Ovary (tissue), 10 donors: ENCODE measurements at regions of chr13 and their contacts with region 1.

Region 1: GRCh38 chr13:102596147-102597028 is at the start of gene TPP2:
- DNase-seq: peak; percentile 99 to 100 (median 99)
- H3K4me3 ChIP-seq: peak within 1 kb of the TSS; percentile 97
- H3K27ac ChIP-seq: peak within 1 kb of the TSS; percentile 97 to 100
- H3K4me1 ChIP-seq: peaks cover 5% of the 10 kb centered on the region
- H3K27me3 ChIP-seq: no peaks in the 10 kb centered on the region
- CTCF ChIP-seq: peak in 1 of 3 donors; percentile 8
- EP300 ChIP-seq: no peak
- POLR2A ChIP-seq: peak; percentile 67
- total RNA-seq, gene TPP2: 27.8 to 50.7 (median 36.5) TPM

Region 2: DNA sequence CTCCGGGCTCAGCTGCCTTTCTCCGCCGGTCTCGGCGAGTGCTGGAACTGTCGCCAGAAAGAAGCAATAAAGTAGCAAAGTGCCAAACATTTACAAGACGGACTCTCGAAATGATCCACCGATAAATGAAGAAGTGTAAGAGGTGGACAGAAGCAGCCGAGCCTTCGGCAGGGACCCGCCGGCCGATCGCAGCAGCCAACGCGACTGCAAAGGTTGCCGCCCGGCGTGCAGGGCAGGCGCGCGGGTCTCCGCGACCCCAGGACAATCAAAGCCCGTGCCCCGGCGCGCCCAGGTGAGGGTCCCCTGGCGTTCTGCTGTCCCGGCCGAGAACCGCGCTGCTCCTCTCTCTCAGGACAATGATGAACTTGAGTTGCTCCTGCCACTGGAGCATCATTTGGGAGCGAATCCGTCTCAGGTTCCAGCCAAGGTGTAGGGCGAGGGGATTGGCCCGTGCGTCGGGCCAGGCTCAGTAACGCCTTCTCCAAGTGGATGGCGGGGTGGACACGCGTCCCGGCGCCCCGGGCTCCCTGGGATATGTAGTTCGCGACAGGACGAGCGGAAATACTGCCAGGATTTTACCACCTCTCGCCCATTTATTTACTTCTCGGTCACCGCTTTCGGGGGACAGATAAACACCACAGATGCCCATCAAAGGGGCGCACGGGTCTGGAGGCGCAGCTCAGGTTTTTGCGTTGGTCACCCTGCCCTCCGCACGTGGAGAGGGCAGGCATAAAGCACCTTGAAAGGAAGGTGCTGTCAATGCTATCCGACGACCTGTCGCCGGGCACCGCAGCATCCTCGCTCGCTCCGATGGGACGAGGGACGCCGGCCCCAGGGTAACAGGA is 202.4 kb after region 1 on chr13 and contains the starts of genes BIVM and POGLUT2:
- intact Hi-C with region 1: loop called in 1 of 4 experiments (anchors 5 kb)
- DNase-seq: peak; percentile 85 to 92 (median 90)
- H3K4me3 ChIP-seq: peak within 1 kb of the TSS; percentile 73
- H3K27ac ChIP-seq: peak within 1 kb of the TSS; percentile 12 to 72
- H3K4me1 ChIP-seq: peaks cover 2% of the 10 kb centered on the region
- H3K27me3 ChIP-seq: no peaks in the 10 kb centered on the region
- CTCF ChIP-seq: no peak
- EP300 ChIP-seq: no peak
- POLR2A ChIP-seq: no peak
- total RNA-seq, gene BIVM: 10.4 to 25.0 (median 21.9) TPM
- total RNA-seq, gene POGLUT2: 4.5 to 8.1 (median 6.3) TPM